Activated CD8-positive, alpha-beta T cell treated with anti-CD3 and anti-CD28 coated beads, Interleukin-2, amount 10 ng/mL, durations not matched to agents 7 days and 5 days (primary cell): ENCODE measurements at regions of chr11 and their contacts with region 1.

Region 1: GRCh38 chr11:119168471-119169281 is at the start of gene NLRX1:
- DNase-seq: peak; percentile 92
- ATAC-seq: peak; percentile 96
- H3K4me3 Mint-ChIP-seq: peak within 1 kb of the TSS; percentile 86
- H3K27ac Mint-ChIP-seq: peak within 1 kb of the TSS; percentile 92
- H3K4me1 Mint-ChIP-seq: peaks cover 30% of the 10 kb centered on the region
- H3K27me3 Mint-ChIP-seq: no peaks in the 10 kb centered on the region
- total RNA-seq, gene NLRX1: 24.6 to 24.8 TPM

Region 2: DNA sequence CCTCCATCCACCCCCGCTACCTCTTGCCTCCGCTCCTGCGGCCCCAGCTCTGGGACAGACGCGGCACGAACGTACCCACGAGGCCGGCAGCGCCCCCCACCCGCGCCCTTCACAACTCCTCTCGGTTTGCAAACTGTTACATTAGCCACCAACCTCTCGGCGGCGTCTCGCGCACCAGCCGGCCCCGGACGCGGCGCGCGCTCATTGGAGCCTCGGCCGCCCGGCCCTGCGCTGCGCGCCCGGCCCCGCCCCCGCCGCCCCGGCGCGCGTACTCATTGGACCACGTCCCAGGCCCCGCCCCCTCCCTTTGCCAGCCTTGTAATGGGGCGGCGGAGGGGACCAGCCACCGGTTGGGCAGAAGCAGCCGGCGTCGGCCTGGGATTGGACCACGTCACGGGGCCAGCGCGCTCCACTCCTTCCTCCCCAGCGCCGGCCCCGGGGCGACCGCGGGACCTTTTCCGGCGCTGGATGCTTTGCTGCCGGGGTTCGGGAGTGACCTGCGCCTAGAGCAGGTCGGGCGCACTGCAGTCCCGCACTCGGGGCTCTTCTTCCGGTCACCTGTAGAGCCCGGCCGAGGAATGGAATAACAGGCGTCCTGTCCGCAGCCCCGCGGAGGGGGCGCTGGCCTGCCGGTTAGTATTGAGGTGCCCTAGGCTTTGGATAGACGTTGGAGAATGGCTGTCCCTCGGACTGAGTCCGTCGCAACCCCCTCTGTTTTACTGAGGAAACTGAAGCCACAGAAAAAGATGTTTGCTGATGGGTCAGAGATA is 111.5 kb before region 1 on chr11 and contains the start of gene HYOU1:
- CTCF ChIA-PET with region 1: no interaction called
- POLR2A ChIA-PET with region 1: no interaction called
- DNase-seq: peak; percentile 99
- ATAC-seq: peak; percentile 96
- H3K4me3 Mint-ChIP-seq: peak within 1 kb of the TSS; percentile 97
- H3K27ac Mint-ChIP-seq: peak within 1 kb of the TSS; percentile 99
- H3K4me1 Mint-ChIP-seq: peaks cover 30% of the 10 kb centered on the region
- H3K27me3 Mint-ChIP-seq: no peaks in the 10 kb centered on the region
- total RNA-seq, gene HYOU1: 133 to 135 TPM

Region 3: GRCh38 chr11:119101759-119102423 is 66.8 kb before region 1 on chr11 and contains the start of gene DPAGT1:
- CTCF ChIA-PET with region 1: interaction called, 3 read pairs
- POLR2A ChIA-PET with region 1: interaction called, 10 read pairs
- DNase-seq: peak; percentile 92
- ATAC-seq: peak; percentile 85
- H3K4me3 Mint-ChIP-seq: peak within 1 kb of the TSS; percentile 90
- H3K27ac Mint-ChIP-seq: peak within 1 kb of the TSS; percentile 95
- H3K4me1 Mint-ChIP-seq: peaks cover 55% of the 10 kb centered on the region
- H3K27me3 Mint-ChIP-seq: no peaks in the 10 kb centered on the region
- total RNA-seq, gene DPAGT1: 52.5 to 57.7 TPM

Region 4: DNA sequence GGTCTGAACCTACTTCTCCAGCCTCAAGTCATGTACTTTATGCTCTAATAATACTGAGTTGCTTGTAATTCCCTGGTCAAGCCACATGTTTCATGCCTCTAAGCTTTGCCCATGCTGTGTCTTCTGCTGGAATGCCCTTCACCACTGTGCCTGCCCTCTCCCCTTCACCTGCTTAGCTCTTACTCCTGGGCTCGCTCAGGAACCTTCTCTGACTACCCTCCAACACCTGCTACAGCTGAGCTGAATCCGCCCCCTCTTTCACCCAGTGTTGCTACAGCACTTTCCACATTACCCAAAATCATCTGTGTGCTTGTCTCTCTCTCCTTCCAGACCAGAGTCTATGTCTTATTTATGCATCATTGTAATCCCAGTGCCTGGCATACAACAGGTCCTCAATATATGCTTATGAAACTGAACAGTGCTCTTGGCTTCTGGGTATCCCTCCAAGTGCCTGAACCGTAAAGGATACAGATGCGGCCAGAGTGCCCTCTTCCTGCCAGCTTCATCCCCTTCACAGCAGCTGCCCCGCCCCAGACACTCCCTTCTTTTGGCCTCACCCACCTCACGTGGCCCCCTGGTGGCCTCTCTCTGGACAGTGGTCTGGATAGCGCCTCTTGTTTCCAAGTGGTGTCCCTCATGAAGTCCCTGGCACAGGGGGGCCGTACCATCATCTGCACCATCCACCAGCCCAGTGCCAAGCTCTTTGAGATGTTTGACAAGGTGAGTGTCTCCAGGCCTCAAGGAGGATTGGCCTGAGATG is 12.8 kb before region 1 on chr11:
- CTCF ChIA-PET with region 1: interaction called, 25 read pairs
- POLR2A ChIA-PET with region 1: interaction called, 15 read pairs
- DNase-seq: no peak
- ATAC-seq: peak; percentile 35
- H3K4me3 Mint-ChIP-seq: no peak overlapping the region
- H3K27ac Mint-ChIP-seq: no peak overlapping the region
- H3K4me1 Mint-ChIP-seq: peaks cover 6% of the 10 kb centered on the region
- H3K27me3 Mint-ChIP-seq: peaks cover 13% of the 10 kb centered on the region

Region 5: GRCh38 chr11:119179989-119180388 is 11.3 kb after region 1 on chr11:
- CTCF ChIA-PET with region 1: interaction called, 34 read pairs
- POLR2A ChIA-PET with region 1: interaction called, 8 read pairs
- DNase-seq: no peak
- ATAC-seq: no peak
- H3K4me3 Mint-ChIP-seq: no peak overlapping the region
- H3K27ac Mint-ChIP-seq: no peak overlapping the region
- H3K4me1 Mint-ChIP-seq: peaks cover 15% of the 10 kb centered on the region
- H3K27me3 Mint-ChIP-seq: no peaks in the 10 kb centered on the region